WTC11 (cell line): ENCODE measurements at regions of chr19 and their contacts with region 1.

Region 1: DNA sequence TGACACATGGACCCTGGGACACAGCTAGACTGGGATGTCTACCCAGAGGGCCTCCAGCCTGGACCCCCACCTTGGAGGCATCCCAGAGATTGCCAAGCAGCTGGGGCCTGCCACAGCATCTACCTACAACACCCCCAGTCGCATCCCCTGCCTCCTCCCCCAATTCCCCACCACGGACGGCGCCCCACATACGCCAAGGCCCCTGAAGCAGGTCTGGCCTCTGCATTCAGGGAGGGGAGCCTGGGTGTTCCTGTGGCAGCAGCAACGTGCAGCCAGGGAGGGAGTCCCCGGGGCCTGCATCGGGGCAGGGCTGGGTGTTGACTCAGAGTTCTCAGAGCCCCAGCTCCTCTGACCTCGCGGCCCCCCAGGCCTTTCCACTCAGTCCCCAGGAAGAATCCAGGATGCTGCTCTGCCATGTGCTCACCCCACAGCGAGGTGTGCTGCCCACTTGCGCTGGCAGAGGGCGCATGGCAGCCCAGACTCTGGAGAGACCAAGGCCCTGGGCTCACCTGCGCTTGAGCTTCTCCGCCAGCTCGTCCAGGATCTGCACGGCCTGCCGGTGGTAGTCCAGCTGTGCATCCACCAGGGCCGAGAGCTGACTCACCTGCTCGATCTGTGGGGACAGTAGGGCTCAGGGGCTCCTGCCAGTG is 19.6 kb downstream of the MPND start:
- DNase-seq: peak; percentile 44
- ATAC-seq: peak; percentile 43
- H3K4me3 Mint-ChIP-seq: no peak overlapping the region
- H3K27ac Mint-ChIP-seq: no peak overlapping the region
- H3K4me1 Mint-ChIP-seq: peaks cover 10% of the 10 kb centered on the region
- H3K27me3 Mint-ChIP-seq: no peaks in the 10 kb centered on the region
- CTCF ChIP-seq: no peak

Region 2: DNA sequence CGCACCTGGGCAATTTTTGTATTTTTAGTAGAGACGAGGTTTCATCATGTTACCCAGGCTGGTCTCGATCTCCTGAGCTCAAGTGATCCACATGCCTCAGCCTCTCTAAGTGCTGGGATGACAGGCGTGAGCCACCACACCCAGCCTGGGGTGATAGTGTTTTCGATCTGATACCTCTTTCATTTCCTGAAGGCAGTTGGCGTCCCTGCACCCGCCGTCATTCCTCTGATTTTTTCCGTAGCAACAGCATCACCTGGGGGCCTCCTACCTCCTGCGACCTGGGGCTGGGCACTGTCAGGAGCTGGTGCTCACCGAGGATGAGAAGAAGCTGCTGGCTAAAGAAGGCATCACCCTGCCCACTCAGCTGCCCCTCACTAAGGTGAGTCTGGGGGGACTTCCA is 198.7 kb before region 1 on chr19:
- CTCF ChIA-PET with region 1: no interaction called
- POLR2A ChIA-PET with region 1: no interaction called
- DNase-seq: no peak
- ATAC-seq: no peak
- H3K4me3 Mint-ChIP-seq: no peak overlapping the region
- H3K27ac Mint-ChIP-seq: no peak overlapping the region
- H3K4me1 Mint-ChIP-seq: no peaks in the 10 kb centered on the region
- H3K27me3 Mint-ChIP-seq: peaks cover 20% of the 10 kb centered on the region
- CTCF ChIP-seq: no peak

Region 3: GRCh38 chr19:4246767-4247593 is 116.0 kb before region 1 on chr19 and contains the start of gene YJU2:
- CTCF ChIA-PET with region 1: no interaction called
- POLR2A ChIA-PET with region 1: no interaction called
- DNase-seq: peak; percentile 99
- ATAC-seq: peak; percentile 98
- H3K4me3 Mint-ChIP-seq: peak within 1 kb of the TSS; percentile 94
- H3K27ac Mint-ChIP-seq: peak within 1 kb of the TSS; percentile 100
- H3K4me1 Mint-ChIP-seq: 0 out of 2 replicates have a peak, but pooled peaks cover 3% of the 10 kb centered on the region
- H3K27me3 Mint-ChIP-seq: peaks cover 11% of the 10 kb centered on the region
- CTCF ChIP-seq: no peak; the same call in 1 of the 2 replicates
- total RNA-seq, gene YJU2: 24.3 to 26.5 TPM (median 25.2 TPM) in 3 replicates

Region 4: GRCh38 chr19:4375164-4376027 is 12.4 kb after region 1 on chr19:
- CTCF ChIA-PET with region 1: interaction called, 37 read pairs
- POLR2A ChIA-PET with region 1: interaction called, 4 read pairs
- DNase-seq: peak; percentile 84
- ATAC-seq: peak; percentile 79
- H3K4me3 Mint-ChIP-seq: no peak overlapping the region
- H3K27ac Mint-ChIP-seq: peak overlapping the region; percentile 88
- H3K4me1 Mint-ChIP-seq: peaks cover 47% of the 10 kb centered on the region
- H3K27me3 Mint-ChIP-seq: no peaks in the 10 kb centered on the region
- CTCF ChIP-seq: no peak

Region 5: DNA sequence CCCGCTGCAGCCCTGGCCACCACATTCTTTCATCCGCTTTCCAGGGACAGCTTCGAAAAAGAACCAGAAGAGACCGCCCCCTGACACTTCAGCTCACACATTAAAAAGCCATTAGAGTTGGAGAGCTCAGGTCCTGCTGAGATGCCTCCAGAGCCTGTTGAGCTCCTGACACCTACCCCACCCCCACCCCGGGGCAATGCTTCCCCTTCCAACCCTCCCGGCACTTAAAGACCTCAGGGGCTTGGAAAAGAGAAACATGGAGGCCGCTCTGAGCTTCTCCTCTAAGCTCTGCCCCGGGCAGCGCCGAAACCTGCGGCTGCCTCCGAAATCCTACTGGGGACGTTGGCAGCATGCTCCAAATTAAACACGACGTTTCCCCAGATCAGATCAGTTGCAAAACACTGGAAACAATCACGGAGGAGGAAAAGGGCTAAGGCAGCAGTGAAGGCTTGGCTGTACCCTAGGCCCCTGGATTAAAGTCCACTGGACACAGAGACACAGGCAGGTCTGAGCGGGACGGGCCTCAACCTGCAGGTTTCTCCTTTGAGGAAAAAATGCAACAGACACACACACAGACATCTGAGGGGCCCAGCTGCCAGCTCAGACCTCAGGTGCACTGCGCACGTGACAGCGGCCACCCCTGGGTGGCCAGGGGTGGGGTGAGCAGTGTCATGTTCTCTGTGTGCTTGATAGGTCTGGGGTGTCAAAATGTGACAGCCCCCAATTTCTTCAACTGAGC is 27.8 kb after region 1 on chr19:
- CTCF ChIA-PET with region 1: interaction called, 13 read pairs
- POLR2A ChIA-PET with region 1: no interaction called
- DNase-seq: peak; percentile 56
- ATAC-seq: peak; percentile 83
- H3K4me3 Mint-ChIP-seq: peak overlapping the region; percentile 66
- H3K27ac Mint-ChIP-seq: peak overlapping the region; percentile 96
- H3K4me1 Mint-ChIP-seq: peaks cover 46% of the 10 kb centered on the region
- H3K27me3 Mint-ChIP-seq: no peaks in the 10 kb centered on the region; the same call in 1 of the 2 replicates
- CTCF ChIP-seq: no peak

Region 6: DNA sequence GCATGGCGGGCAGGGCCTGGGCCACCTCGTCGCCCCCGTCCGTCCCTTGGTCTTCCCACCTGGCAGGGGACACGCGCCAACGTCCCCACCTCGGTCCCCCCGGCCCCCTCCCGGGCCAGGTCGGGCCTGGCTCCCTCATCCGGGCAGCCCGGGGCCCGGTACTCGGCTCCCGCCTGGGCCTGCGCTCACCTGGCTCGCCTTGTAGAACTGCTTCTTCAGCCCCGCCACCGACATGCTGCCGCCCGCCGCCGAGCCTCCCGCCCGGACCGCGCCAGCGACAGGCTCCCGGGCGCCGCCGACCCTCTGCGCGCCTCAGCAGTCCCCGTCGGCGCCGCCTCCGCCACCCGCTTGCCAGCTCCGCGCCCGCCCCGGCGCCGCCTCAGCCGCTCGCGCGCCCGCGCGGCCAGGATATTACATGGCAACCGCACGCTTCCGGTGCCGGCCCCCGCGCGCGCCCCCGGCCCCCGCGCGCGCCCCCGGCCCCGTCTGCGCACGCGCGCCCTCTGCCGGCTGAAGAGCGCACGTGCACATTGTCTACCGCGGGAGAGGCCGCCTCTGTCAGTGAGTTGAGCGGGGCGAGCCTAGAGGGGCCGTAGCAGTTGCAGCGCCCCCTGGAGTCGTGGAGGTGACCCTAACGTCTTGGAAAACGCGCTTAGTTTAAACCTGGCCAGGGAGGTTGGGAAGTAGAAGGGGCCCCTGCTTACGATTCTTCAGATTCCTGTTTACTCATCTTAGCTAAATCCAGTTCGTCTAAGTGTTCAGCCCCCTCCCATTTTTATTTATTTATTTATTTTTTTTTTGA is 37.4 kb after region 1 on chr19 and contains the start of gene SH3GL1:
- CTCF ChIA-PET with region 1: interaction called, 13 read pairs
- POLR2A ChIA-PET with region 1: no interaction called
- DNase-seq: peak; percentile 89
- ATAC-seq: peak; percentile 74
- H3K4me3 Mint-ChIP-seq: peak within 1 kb of the TSS; percentile 96
- H3K27ac Mint-ChIP-seq: peak within 1 kb of the TSS; percentile 97
- H3K4me1 Mint-ChIP-seq: peaks cover 38% of the 10 kb centered on the region
- H3K27me3 Mint-ChIP-seq: no peaks in the 10 kb centered on the region
- CTCF ChIP-seq: peak; percentile 92
- total RNA-seq, gene SH3GL1: 89.4 to 109 TPM (median 89.7 TPM) in 3 replicates

Region 7: GRCh38 chr19:4429771-4430171 is 66.8 kb after region 1 on chr19:
- CTCF ChIA-PET with region 1: no interaction called
- POLR2A ChIA-PET with region 1: no interaction called
- DNase-seq: no peak
- ATAC-seq: no peak
- H3K4me3 Mint-ChIP-seq: no peak overlapping the region
- H3K27ac Mint-ChIP-seq: no peak overlapping the region
- H3K4me1 Mint-ChIP-seq: no peaks in the 10 kb centered on the region
- H3K27me3 Mint-ChIP-seq: no peaks in the 10 kb centered on the region
- CTCF ChIP-seq: no peak